MCF 10A (cell line): ENCODE measurements at regions of chr6 and their contacts with region 1.

Region 1: GRCh38 chr6:139364302-139364981 is 10.0 kb downstream of the CITED2 start:
- DNase-seq: peak; percentile 53
- H3K4me3 Mint-ChIP-seq: no peak overlapping the region
- H3K27ac Mint-ChIP-seq: no peak overlapping the region
- H3K4me1 Mint-ChIP-seq: no peaks in the 10 kb centered on the region
- H3K27me3 Mint-ChIP-seq: no peaks in the 10 kb centered on the region
- CTCF ChIP-seq: peak; percentile 66

Region 2: GRCh38 chr6:138817822-138818308 is 546.6 kb before region 1 on chr6:
- CTCF ChIA-PET with region 1: interaction called, 29 read pairs
- POLR2A ChIA-PET with region 1: interaction called, 3 read pairs
- intact Hi-C with region 1: loop called (anchors 1 kb)
- DNase-seq: no peak
- H3K4me3 Mint-ChIP-seq: no peak overlapping the region
- H3K27ac Mint-ChIP-seq: no peak overlapping the region
- H3K4me1 Mint-ChIP-seq: peaks cover 10% of the 10 kb centered on the region
- H3K27me3 Mint-ChIP-seq: no peaks in the 10 kb centered on the region
- CTCF ChIP-seq: no peak

Region 3: DNA sequence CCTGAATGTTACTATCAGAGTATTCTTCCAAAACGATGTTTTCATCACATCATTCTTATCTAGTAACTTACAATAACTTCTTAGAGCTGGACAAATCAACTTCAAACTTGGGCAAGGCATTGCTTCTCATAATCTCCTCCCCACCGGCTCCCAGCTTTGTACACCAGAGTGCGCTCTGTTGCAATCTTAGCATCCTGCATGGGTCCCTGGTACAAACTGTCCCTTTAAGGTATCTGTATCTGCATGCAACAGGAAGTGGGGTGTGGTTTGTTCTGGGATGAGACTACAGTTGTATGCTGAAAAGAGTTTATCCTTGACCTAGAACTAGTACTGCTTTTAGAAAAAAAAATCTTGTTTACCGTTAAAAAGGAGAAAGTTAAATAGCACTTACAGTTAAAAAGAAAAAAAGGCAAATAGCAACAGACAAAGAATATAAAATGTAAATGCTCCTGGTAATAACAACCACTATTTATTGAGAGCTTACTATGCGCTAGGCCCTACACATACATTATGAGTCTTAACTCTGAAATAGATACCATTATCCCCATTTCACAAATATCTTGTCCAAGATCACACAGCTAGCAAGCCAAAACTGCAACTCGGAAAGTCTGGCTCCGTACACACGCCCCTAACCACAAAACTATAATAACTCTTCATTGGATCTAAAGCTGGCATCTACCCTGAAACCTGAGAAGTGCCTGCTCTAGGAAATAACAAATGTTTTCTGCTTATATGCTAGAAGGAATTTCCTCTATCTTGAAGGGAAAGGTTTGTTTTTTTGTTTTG is 239.4 kb before region 1 on chr6:
- CTCF ChIA-PET with region 1: interaction called, 3 read pairs
- POLR2A ChIA-PET with region 1: no interaction called
- intact Hi-C with region 1: loop called (anchors 1 kb)
- DNase-seq: peak; percentile 80
- H3K4me3 Mint-ChIP-seq: no peak overlapping the region
- H3K27ac Mint-ChIP-seq: no peak overlapping the region
- H3K4me1 Mint-ChIP-seq: peaks cover 22% of the 10 kb centered on the region
- H3K27me3 Mint-ChIP-seq: no peaks in the 10 kb centered on the region
- CTCF ChIP-seq: peak; percentile 10

Region 4: DNA sequence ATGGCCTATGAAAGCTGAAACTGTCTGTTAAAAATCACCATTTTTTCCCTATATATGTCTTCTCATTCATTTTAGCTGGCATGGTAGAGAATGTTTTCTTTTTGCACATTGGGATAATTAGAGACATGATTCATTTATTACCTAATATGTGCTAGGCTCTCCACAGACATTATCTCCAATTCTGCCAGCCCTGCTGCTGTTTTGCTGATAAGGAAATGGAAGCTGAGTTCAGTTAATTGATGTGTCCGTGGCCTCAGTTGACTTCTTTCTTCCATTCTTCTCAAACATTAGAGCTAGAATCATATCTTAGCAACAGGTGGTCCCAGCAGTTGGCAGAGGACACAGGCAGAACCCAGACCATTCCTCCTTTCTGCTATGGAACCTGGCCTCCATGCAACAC is 654.1 kb after region 1 on chr6:
- CTCF ChIA-PET with region 1: no interaction called
- POLR2A ChIA-PET with region 1: no interaction called
- intact Hi-C with region 1: no loop called
- DNase-seq: no peak
- H3K4me3 Mint-ChIP-seq: no peak overlapping the region
- H3K27ac Mint-ChIP-seq: no peak overlapping the region
- H3K4me1 Mint-ChIP-seq: no peaks in the 10 kb centered on the region
- H3K27me3 Mint-ChIP-seq: no peaks in the 10 kb centered on the region
- CTCF ChIP-seq: no peak